Naive thymus-derived CD4-positive, alpha-beta T cell (primary cell): ENCODE measurements at regions of chr3 and their contacts with region 1.

Region 1: GRCh38 chr3:59450946-59451763 is 401.3 kb upstream of the CFAP20DC start:
- DNase-seq: peak in 8 of 9 donors; percentile 58 to 93 (median 86)
- ATAC-seq: peak; percentile 95
- H3K4me3 ChIP-seq: peak overlapping the region; percentile 30
- H3K4me3 Mint-ChIP-seq: peak overlapping the region; percentile 59 to 83 (median 77)
- H3K27ac ChIP-seq: peak overlapping the region; percentile 76
- H3K27ac Mint-ChIP-seq: peak overlapping the region; percentile 90 to 100 (median 97)
- H3K4me1 ChIP-seq: peaks cover 45 to 72% of the 10 kb centered on the region in 2 donors
- H3K4me1 Mint-ChIP-seq: peaks cover 52 to 94% (median 79%) of the 10 kb centered on the region in 7 donors
- H3K27me3 ChIP-seq: no peaks in the 10 kb centered on the region
- H3K27me3 Mint-ChIP-seq: no peaks in the 10 kb centered on the region

Region 2: GRCh38 chr3:59406943-59407342 is 44.2 kb before region 1 on chr3:
- CTCF ChIA-PET with region 1: no interaction called
- POLR2A ChIA-PET with region 1: no interaction called
- intact Hi-C with region 1: loop called in 1 of 2 experiments (anchors 5 kb)
- DNase-seq: no peak
- ATAC-seq: no peak
- H3K4me3 ChIP-seq: no peak overlapping the region
- H3K4me3 Mint-ChIP-seq: peak overlapping the region in 7 of 10 donors; percentile 3 to 57 (median 33)
- H3K27ac ChIP-seq: no peak overlapping the region
- H3K27ac Mint-ChIP-seq: peak overlapping the region in 7 of 9 donors; percentile 35 to 77 (median 39)
- H3K4me1 ChIP-seq: peaks cover 0 to 8% of the 10 kb centered on the region in 2 donors
- H3K4me1 Mint-ChIP-seq: peaks cover 11 to 40% (median 31%) of the 10 kb centered on the region in 7 donors
- H3K27me3 ChIP-seq: no peaks in the 10 kb centered on the region
- H3K27me3 Mint-ChIP-seq: no peaks in the 10 kb centered on the region

Region 3: GRCh38 chr3:59436164-59436958 is 14.8 kb before region 1 on chr3:
- CTCF ChIA-PET with region 1: interaction called, 3 read pairs
- POLR2A ChIA-PET with region 1: interaction called, 5 read pairs
- intact Hi-C with region 1: loop called in 1 of 2 experiments (anchors 2 kb)
- DNase-seq: peak in 7 of 9 donors; percentile 47 to 79 (median 68)
- ATAC-seq: peak; percentile 72
- H3K4me3 ChIP-seq: no peak overlapping the region
- H3K4me3 Mint-ChIP-seq: peak overlapping the region in 3 of 10 donors; percentile 9 to 58 (median 28)
- H3K27ac ChIP-seq: no peak overlapping the region
- H3K27ac Mint-ChIP-seq: peak overlapping the region; percentile 51 to 94 (median 85)
- H3K4me1 ChIP-seq: no peaks in the 10 kb centered on the region
- H3K4me1 Mint-ChIP-seq: peaks cover 2 to 44% (median 16%) of the 10 kb centered on the region in 7 donors
- H3K27me3 ChIP-seq: no peaks in the 10 kb centered on the region
- H3K27me3 Mint-ChIP-seq: no peaks in the 10 kb centered on the region

Region 4: GRCh38 chr3:59514865-59515482 is 63.8 kb after region 1 on chr3:
- CTCF ChIA-PET with region 1: no interaction called
- POLR2A ChIA-PET with region 1: no interaction called
- intact Hi-C with region 1: loop called in 1 of 2 experiments (anchors 5 kb)
- DNase-seq: no peak
- ATAC-seq: peak; percentile 47
- H3K4me3 ChIP-seq: no peak overlapping the region
- H3K4me3 Mint-ChIP-seq: no peak overlapping the region
- H3K27ac ChIP-seq: no peak overlapping the region
- H3K27ac Mint-ChIP-seq: no peak overlapping the region
- H3K4me1 ChIP-seq: peaks cover 0 to 4% of the 10 kb centered on the region in 2 donors
- H3K4me1 Mint-ChIP-seq: peaks cover 5 to 44% (median 15%) of the 10 kb centered on the region in 7 donors
- H3K27me3 ChIP-seq: no peaks in the 10 kb centered on the region
- H3K27me3 Mint-ChIP-seq: peaks cover 0 to 14% (median 0%) of the 10 kb centered on the region in 5 donors

Region 5: GRCh38 chr3:59717679-59718205 is 266.6 kb after region 1 on chr3:
- CTCF ChIA-PET with region 1: no interaction called
- POLR2A ChIA-PET with region 1: no interaction called
- intact Hi-C with region 1: no loop called
- DNase-seq: no peak
- ATAC-seq: no peak
- H3K4me3 ChIP-seq: no peak overlapping the region
- H3K4me3 Mint-ChIP-seq: no peak overlapping the region
- H3K27ac ChIP-seq: no peak overlapping the region
- H3K27ac Mint-ChIP-seq: no peak overlapping the region
- H3K4me1 ChIP-seq: no peaks in the 10 kb centered on the region
- H3K4me1 Mint-ChIP-seq: no peaks in the 10 kb centered on the region
- H3K27me3 ChIP-seq: no peaks in the 10 kb centered on the region
- H3K27me3 Mint-ChIP-seq: peaks cover 0 to 14% (median 0%) of the 10 kb centered on the region in 5 donors

Region 6: DNA sequence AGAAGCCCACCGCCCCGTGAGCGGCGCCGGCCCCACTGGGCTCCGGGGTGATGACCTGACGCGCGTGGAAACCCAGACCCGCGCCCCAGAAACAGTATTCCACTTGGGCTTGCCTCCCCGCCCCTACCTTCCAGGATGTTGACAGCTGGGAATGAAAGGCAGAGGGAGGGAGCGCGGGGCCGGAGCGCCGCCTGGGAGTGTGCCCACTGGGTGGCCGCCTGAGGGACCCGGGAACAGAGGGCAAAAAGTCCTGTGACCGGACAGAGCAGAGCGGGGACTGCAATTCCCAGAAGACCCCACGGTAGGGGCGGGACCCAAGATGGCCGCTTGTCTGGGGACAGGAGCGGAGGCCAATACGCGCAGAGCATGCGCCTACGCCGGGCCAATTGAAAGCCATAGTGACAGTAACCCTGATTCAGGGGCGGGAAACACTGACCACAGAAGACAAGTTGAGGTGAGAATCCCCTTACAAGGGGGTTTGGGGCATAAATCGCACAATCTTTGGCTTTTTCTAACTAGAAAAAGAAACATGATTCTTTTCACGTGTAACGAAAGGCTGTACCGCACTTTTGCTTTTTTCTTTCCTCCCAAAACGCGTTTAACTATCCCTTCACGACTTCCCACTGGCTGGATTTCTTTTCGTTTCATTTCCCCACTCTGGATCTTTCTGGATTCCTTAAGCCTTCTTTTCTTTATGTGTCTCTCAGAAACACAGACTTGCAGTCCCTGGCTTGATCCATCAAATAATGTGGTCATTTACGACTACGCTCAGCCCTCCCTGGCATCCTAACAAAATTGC is 1800.2 kb after region 1 on chr3 and contains the start of gene FHIT:
- CTCF ChIA-PET with region 1: no interaction called
- POLR2A ChIA-PET with region 1: no interaction called
- intact Hi-C with region 1: loop called (anchors 2 to 10 kb)
- DNase-seq: peak; percentile 73 to 89 (median 87)
- ATAC-seq: peak; percentile 96
- H3K4me3 ChIP-seq: peak within 1 kb of the TSS; percentile 83
- H3K4me3 Mint-ChIP-seq: peak within 1 kb of the TSS; percentile 83 to 94 (median 92)
- H3K27ac ChIP-seq: peak within 1 kb of the TSS; percentile 80
- H3K27ac Mint-ChIP-seq: peak within 1 kb of the TSS; percentile 74 to 95 (median 84)
- H3K4me1 ChIP-seq: peaks cover 11 to 13% of the 10 kb centered on the region in 2 donors
- H3K4me1 Mint-ChIP-seq: peaks cover 10 to 27% (median 25%) of the 10 kb centered on the region in 7 donors
- H3K27me3 ChIP-seq: no peaks in the 10 kb centered on the region
- H3K27me3 Mint-ChIP-seq: peaks cover 0 to 12% (median 1%) of the 10 kb centered on the region in 5 donors
- total RNA-seq, gene FHIT: 53.4 to 230 (median 191) TPM